ENCODE measurements at regions of chr7 and their contacts with region 1.

Region 1: GRCh38 chr7:38222481-38223096 is 44.5 kb downstream of the STARD3NL start:
- DNase-seq: no peak
- H3K4me3 Mint-ChIP-seq: no peak overlapping the region
- H3K27ac Mint-ChIP-seq: peak overlapping the region; percentile 31
- H3K4me1 Mint-ChIP-seq: peaks cover 29% of the 10 kb centered on the region
- H3K27me3 Mint-ChIP-seq: no peaks in the 10 kb centered on the region

Region 2: DNA sequence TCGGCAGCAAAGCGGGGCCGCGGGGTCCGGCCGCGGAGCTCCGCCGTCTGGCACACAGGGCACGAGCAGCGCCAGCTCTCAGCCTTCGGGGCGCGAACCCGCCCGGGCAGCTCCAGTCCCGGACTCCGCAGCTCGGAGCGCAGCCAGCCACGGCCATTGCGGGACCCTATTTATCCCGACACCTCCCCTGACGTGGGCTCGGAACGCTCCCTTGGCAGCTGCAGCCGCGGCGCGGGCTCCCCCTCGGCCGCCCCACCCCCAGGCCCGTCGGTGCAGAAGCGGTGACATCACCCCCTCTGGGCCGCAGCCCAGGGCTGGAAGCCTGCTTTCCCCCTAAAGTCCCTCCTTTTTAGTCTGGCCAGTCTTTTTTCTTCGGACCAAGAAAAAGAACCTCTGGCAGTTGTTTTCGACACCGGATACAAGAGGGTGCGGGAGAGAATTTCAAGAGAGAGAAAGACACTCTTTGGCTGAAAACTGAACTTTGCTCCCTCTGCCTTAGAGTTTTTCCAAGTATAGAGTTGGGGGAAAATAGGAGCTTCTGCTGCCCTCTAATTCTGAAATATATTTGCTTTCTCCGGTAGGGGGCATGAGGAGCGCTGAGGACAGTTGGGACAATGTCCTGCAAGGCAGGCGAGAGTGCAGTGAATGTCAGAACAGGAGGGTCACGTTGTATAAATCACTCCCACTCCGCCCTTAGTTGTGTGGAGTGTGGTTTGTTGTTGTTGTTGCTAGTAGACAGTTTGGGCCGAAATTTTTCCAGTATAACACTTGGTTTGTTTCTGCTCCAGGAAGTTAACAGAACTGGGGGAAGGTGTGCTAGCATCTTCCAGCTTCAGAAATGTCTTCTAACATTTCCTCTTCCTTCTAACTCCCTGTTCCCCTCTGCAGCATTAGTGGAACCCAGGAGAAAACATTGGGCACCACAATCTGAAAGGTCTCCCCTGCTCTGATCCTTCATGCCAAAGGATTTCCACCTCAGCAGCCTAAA is 305.6 kb before region 1 on chr7 and contains the start of gene SFRP4:
- CTCF ChIA-PET with region 1: interaction called, 3 read pairs
- POLR2A ChIA-PET with region 1: no interaction called
- intact Hi-C with region 1: loop called (anchors 2 kb)
- DNase-seq: peak; percentile 11
- H3K4me3 Mint-ChIP-seq: no peak within 1 kb of the TSS
- H3K27ac Mint-ChIP-seq: no peak within 1 kb of the TSS
- H3K4me1 Mint-ChIP-seq: peaks cover 12% of the 10 kb centered on the region
- H3K27me3 Mint-ChIP-seq: peaks cover 57% of the 10 kb centered on the region
- total RNA-seq, gene SFRP4: not detected

Region 3: DNA sequence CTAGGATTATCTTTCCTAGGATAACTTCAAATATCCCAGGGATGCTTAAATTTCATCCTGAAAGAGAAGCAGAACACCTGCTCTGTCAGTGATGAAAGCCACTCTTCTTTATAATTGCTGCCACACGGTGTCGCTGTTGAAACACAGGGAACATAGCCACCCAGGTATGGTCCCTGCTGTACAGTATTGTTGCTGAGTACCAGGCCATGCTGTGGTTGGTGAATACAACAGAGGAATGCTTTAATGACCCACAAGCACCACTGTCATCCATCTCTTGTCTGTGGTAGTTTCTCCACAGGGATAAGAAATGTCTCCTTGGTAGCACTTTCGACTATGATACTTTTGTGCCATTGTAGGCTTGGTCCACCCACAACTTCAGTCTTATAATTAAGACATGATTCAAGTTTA is 115.1 kb before region 1 on chr7:
- CTCF ChIA-PET with region 1: interaction called, 98 read pairs
- POLR2A ChIA-PET with region 1: interaction called, 3 read pairs
- intact Hi-C with region 1: loop called (anchors 1 kb)
- DNase-seq: peak; percentile 73
- H3K4me3 Mint-ChIP-seq: no peak overlapping the region
- H3K27ac Mint-ChIP-seq: no peak overlapping the region
- H3K4me1 Mint-ChIP-seq: no peaks in the 10 kb centered on the region
- H3K27me3 Mint-ChIP-seq: peaks cover 13% of the 10 kb centered on the region

Region 4: GRCh38 chr7:38178004-38178694 is 44.4 kb before region 1 on chr7 and contains the start of gene STARD3NL:
- CTCF ChIA-PET with region 1: interaction called, 5 read pairs
- POLR2A ChIA-PET with region 1: no interaction called
- intact Hi-C with region 1: loop called (anchors 2 kb)
- DNase-seq: peak; percentile 92
- H3K4me3 Mint-ChIP-seq: peak within 1 kb of the TSS; percentile 96
- H3K27ac Mint-ChIP-seq: peak within 1 kb of the TSS; percentile 90
- H3K4me1 Mint-ChIP-seq: peaks cover 32% of the 10 kb centered on the region
- H3K27me3 Mint-ChIP-seq: peaks cover 9% of the 10 kb centered on the region
- total RNA-seq, gene STARD3NL: 34.4 to 34.7 TPM

Region 5: DNA sequence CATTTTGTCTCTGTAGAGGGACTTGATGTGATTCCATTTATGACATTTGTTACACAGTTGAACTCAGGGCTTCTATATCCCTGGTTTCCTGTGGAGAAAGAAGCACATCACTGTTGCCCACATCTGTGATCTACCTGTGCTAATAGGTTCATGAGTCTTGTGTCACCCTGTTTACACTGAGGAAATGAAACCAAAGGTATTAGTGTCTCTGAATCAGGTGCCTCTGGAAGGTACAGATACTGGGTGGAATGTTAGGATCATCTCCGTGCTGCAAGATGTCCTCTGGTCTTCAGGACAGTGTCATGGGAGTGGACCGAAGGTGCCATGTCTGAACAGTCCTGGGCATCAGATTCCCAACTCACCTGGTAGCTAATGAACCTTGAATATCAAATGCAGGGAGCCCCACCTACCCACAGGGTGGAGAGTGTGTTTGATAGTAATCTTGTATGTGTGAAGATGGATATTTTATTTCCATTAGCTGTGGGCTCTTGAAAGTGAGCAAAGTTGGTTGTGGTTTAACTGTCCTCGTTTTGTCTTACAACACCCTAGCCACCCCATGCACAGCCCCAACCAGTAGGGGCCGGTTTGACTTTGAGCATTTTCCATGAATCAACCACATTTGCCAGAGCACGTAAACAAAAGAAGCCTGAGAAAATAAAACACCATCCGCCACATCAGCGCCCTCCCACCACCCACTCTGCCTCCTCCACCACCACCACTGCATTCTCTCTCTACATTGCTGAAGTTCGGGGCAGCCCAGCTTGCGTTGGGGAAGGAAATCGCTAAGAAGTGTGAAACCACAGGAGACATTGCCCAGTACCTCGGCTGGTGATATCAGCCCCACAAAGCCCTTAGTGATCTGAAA is 10.1 kb after region 1 on chr7:
- CTCF ChIA-PET with region 1: interaction called, 10 read pairs
- POLR2A ChIA-PET with region 1: no interaction called
- intact Hi-C with region 1: loop called (anchors 1 kb)
- DNase-seq: peak; percentile 88
- H3K4me3 Mint-ChIP-seq: peak overlapping the region; percentile 44
- H3K27ac Mint-ChIP-seq: peak overlapping the region; percentile 77
- H3K4me1 Mint-ChIP-seq: peaks cover 44% of the 10 kb centered on the region
- H3K27me3 Mint-ChIP-seq: no peaks in the 10 kb centered on the region